GM12878 (cell line): ENCODE measurements at regions of chr9 and their contacts with region 1.

Region 1: DNA sequence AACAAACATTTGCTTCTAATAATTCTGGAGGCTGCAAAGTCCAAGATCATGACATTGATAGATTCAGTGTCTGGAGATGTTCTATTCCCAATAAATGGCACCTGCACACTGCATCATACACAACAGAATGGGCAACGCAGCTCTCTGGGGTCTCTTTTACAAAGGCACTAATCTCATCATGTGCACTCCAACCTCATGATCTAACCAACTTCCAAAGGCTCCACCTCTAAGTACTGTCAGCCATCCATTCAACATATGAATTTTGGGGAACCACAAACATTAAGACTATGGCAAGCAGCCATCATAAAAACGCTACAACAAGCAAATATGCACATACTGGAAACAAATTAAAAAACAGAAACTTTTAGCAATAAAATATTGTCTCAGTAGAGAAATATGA is 121.1 kb downstream of the CYLC2 start:
- DNase-seq: no peak
- ATAC-seq: no peak
- H3K4me3 ChIP-seq: no peak overlapping the region
- H3K27ac ChIP-seq: no peak overlapping the region
- H3K4me1 ChIP-seq: no peaks in the 10 kb centered on the region
- H3K27me3 ChIP-seq: no peaks in the 10 kb centered on the region
- CTCF ChIP-seq: no peak
- EP300 ChIP-seq: no peak
- POLR2A ChIP-seq: no peak
- RAD21 ChIP-seq: no peak

Region 2: DNA sequence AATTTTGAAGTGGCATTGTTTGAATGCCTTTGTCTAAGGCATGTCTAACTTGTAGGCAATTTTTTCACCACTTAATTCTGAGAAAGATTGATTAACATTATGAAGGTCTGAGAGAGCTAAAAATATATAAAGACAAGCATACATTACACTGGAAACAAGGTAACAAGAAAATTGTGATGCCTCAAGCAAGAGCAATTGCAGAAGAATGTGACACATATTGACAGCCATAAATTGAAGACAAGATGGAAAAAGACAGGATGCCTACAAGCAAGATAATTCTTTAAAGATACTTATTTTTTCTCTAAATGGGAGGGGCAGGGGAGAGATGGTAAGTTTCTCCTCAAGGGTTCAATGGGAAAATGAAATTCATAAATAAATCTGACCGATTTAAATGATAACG is 224.2 kb before region 1 on chr9:
- CTCF ChIA-PET with region 1: no interaction called
- POLR2A ChIA-PET with region 1: no interaction called
- RAD21 ChIA-PET with region 1: no interaction called
- SMC1A ChIA-PET with region 1: no interaction called
- in situ Hi-C with region 1: no loop called
- intact Hi-C with region 1: no loop called
- DNase-seq: no peak
- ATAC-seq: no peak
- H3K4me3 ChIP-seq: no peak overlapping the region
- H3K27ac ChIP-seq: no peak overlapping the region
- H3K4me1 ChIP-seq: no peaks in the 10 kb centered on the region
- H3K27me3 ChIP-seq: no peaks in the 10 kb centered on the region
- CTCF ChIP-seq: no peak
- EP300 ChIP-seq: no peak
- POLR2A ChIP-seq: no peak
- RAD21 ChIP-seq: no peak

Region 3: DNA sequence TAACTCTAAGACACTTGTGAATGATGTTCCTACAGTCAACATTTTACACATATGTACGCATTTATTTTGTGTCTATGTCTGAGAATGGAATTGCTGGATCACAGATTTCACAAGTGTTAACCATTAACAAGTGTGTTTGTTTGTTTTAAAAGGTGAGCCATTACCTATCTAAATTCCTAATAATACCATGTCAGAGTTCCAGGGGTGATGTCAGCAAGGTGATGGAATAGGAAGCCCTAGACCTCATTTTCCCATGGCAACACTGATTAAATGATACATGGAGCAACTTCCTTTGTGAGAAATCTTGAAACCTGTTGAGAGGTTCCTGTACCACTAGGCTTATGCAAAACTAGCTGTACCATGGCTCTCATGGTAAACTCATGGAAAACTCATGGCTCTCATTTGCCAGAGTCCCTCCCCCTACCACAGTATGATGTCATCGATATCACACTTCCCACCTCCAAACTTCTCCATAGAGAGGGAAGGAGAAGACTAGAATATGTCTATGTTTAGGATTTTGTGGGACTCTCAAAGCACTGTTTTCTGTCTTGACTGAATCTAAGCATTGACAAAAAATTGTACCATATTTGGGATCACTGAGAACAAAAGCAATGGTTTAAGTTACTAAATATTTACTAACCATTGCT is 188.7 kb after region 1 on chr9:
- CTCF ChIA-PET with region 1: no interaction called
- POLR2A ChIA-PET with region 1: no interaction called
- RAD21 ChIA-PET with region 1: no interaction called
- SMC1A ChIA-PET with region 1: no interaction called
- in situ Hi-C with region 1: no loop called
- intact Hi-C with region 1: loop called (anchors 5 kb)
- DNase-seq: no peak
- ATAC-seq: no peak
- H3K4me3 ChIP-seq: no peak overlapping the region
- H3K27ac ChIP-seq: no peak overlapping the region
- H3K4me1 ChIP-seq: no peaks in the 10 kb centered on the region
- H3K27me3 ChIP-seq: no peaks in the 10 kb centered on the region
- CTCF ChIP-seq: no peak
- EP300 ChIP-seq: no peak
- POLR2A ChIP-seq: no peak
- RAD21 ChIP-seq: no peak